Caco-2 (cell line): ENCODE measurements at regions of chr7 and their contacts with region 1.

Region 1: DNA sequence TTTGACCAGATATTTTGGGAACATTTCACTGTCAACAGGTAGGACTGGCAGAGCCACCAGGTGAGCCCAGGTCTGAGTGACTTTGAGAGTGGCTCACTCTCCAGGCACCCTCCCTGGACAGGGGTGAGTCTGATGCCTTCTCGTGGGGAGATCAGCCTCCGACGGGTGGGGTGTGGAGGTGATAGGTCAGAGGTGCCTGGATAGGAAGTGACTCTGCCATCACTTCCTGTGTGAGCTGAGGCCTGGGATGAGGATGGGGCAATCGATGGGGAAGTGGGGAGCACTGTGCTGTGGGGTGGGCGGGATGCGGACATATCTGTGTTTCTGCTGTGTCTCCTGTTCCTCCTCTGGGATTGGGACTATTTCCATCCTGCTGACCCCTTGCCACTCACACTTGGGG is 34.6 kb downstream of the IFT22 start:
- DNase-seq: no peak
- H3K4me3 ChIP-seq: no peak overlapping the region
- H3K4me3 Mint-ChIP-seq: no peak overlapping the region
- H3K27ac Mint-ChIP-seq: no peak overlapping the region
- H3K4me1 ChIP-seq: no peaks in the 10 kb centered on the region
- H3K4me1 Mint-ChIP-seq: peaks cover 6% of the 10 kb centered on the region
- H3K27me3 ChIP-seq: no peaks in the 10 kb centered on the region
- H3K27me3 Mint-ChIP-seq: peaks cover 14% of the 10 kb centered on the region
- CTCF ChIP-seq: no peak

Region 2: GRCh38 chr7:101185258-101185839 is 101.7 kb before region 1 on chr7:
- CTCF ChIA-PET with region 1: interaction called, 14 read pairs
- POLR2A ChIA-PET with region 1: no interaction called
- intact Hi-C with region 1: no loop called
- DNase-seq: no peak
- H3K4me3 ChIP-seq: no peak overlapping the region
- H3K4me3 Mint-ChIP-seq: no peak overlapping the region
- H3K27ac Mint-ChIP-seq: no peak overlapping the region
- H3K4me1 ChIP-seq: peaks cover 10% of the 10 kb centered on the region
- H3K4me1 Mint-ChIP-seq: peaks cover 10% of the 10 kb centered on the region
- H3K27me3 ChIP-seq: no peaks in the 10 kb centered on the region
- H3K27me3 Mint-ChIP-seq: peaks cover 5% of the 10 kb centered on the region
- CTCF ChIP-seq: no peak

Region 3: DNA sequence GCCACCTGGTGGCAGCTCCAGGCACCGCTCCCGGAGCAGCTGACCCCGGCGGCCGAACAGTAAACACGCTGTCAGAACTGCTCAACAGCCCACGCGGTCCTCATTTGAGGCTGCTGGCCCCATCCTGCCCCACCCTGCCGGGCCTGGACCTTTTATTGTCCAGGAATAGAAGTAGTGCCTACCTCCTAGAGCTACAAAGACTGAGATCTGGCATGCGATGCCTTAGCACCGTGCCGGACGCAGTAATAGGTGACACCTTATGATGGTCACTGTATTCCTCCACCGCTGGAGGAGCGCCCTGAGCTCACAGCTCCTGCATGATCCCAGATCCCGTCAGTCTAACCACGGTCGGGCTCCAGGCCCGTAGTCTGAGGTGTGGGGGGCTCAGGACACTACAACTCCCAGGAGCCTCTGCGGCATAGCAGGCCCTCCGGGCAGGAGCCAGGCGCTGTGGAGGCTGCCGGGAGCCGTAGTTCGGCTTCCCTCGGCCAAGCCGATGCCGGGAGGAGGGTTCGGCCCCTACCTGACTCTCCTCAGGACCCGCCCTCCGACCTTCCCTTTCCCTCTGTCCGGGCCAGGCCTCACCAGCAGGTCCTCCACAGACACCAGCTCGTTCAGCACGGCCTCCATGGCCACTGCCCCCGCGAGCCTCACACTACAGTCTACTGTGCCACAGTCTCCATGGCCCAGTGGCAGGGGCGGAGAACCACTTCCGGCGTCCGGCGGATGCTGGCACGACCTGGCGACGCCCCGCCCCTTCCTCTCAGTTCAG is 42.5 kb before region 1 on chr7 and contains the start of gene FIS1:
- CTCF ChIA-PET with region 1: interaction called, 16 read pairs
- POLR2A ChIA-PET with region 1: no interaction called
- intact Hi-C with region 1: loop called (anchors 1 kb)
- DNase-seq: peak; percentile 94 to 95
- H3K4me3 ChIP-seq: peak within 1 kb of the TSS; percentile 95
- H3K4me3 Mint-ChIP-seq: peak within 1 kb of the TSS; percentile 92
- H3K27ac Mint-ChIP-seq: peak within 1 kb of the TSS; percentile 93
- H3K4me1 ChIP-seq: peaks cover 13% of the 10 kb centered on the region; the same call in 1 of the 2 replicates
- H3K4me1 Mint-ChIP-seq: peaks cover 10% of the 10 kb centered on the region
- H3K27me3 ChIP-seq: no peaks in the 10 kb centered on the region
- H3K27me3 Mint-ChIP-seq: no peaks in the 10 kb centered on the region
- CTCF ChIP-seq: peak; percentile 93 to 95
- total RNA-seq, gene FIS1: 97.9 and 99.9 TPM in 2 replicates

Region 4: GRCh38 chr7:101251871-101252659 is 35.0 kb before region 1 on chr7:
- CTCF ChIA-PET with region 1: interaction called, 14 read pairs
- POLR2A ChIA-PET with region 1: no interaction called
- intact Hi-C with region 1: loop called (anchors 2 kb)
- DNase-seq: peak; percentile 99 to 100
- H3K4me3 ChIP-seq: peak overlapping the region; percentile 80
- H3K4me3 Mint-ChIP-seq: peak overlapping the region; percentile 88
- H3K27ac Mint-ChIP-seq: peak overlapping the region; percentile 92
- H3K4me1 ChIP-seq: no peaks in the 10 kb centered on the region
- H3K4me1 Mint-ChIP-seq: peaks cover 6% of the 10 kb centered on the region
- H3K27me3 ChIP-seq: no peaks in the 10 kb centered on the region
- H3K27me3 Mint-ChIP-seq: no peaks in the 10 kb centered on the region
- CTCF ChIP-seq: no peak